Heart left ventricle (tissue), 16 donors: ENCODE measurements at regions of chr9 and their contacts with region 1.

Region 1: DNA sequence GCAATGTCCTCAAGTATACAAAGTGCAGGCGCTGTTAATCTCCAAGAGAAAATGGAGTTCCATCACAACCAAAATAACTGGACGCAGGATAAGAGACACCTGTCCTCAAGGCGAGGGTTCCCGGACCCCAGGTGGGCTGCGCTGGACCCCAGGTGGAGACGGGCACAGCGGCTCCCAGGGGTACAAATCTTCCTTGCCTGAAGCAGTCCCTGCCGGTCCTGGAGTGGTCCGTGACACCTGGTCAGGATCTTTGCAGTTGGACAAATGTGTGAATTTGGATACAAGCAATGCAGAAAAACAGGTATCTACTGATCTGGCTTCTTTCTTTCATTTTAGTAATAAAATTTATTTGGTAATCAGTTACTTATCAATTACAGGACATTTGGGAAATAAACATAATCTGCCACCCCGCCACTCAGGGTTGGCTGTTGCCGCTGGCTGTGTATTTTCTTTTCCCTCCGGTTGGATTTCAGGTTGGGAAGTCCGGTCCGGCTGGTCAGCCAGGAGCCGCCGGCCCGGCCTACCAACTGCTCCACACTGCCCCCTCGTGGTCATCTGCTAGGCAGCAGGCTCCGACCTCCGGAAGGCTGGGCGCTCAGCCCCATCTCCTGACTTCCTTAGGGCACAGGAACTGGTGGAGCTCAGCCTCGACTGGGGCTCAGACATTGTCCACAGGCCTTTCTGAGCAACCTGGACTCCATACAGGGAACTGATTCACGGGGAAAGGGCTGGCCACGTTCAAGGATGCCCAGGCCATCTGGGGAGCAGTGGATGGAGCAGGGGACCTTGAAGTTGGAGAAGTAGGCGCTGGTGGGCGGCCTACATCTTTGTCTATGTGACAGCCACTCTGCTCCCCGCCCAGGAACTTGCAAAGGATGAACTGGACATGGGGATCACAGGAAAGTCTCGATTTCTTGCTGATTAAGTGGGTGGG is 43.4 kb downstream of the NXNL2 start:
- DNase-seq: peak; percentile 70 to 92 (median 76)
- ATAC-seq: peak; percentile 84 to 93 (median 90)
- H3K4me3 ChIP-seq: peak overlapping the region in 3 of 12 donors; percentile 11 to 21 (median 18)
- H3K27ac ChIP-seq: no peak overlapping the region
- H3K4me1 ChIP-seq: peaks cover 0 to 8% (median 3%) of the 10 kb centered on the region in 12 donors
- H3K27me3 ChIP-seq: peaks cover 0 to 5% (median 0%) of the 10 kb centered on the region in 9 donors
- CTCF ChIP-seq: peak; percentile 94 to 99 (median 96)
- POLR2A ChIP-seq: no peak

Region 2: DNA sequence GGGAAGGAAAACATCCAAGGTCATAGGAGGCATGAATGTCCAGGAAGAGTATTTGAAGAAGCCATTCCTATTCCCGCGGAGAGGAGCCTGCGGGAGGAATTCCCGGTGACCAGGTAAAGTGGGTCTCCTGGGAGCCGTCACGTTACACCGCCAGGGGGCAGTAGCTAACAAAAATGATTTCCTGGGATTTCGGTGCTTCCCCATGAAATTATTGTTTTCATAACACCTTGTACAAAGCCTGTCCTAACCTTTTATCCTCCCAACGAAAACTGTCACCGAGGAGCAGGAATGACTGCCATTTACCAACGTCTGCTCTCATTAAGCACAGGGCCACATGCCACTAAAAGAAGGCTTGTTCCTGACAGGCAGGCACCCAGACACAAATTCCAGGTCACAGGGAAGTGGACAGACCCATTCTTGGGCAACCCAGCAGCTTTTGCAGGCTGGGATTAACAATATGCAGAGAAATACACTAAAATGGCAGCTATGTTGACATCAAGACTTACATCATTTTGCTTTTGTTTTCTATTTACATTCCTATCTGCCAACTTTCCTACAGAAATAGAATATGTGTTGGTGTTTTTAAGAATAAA is 893.7 kb before region 1 on chr9:
- intact Hi-C with region 1: loop called in 3 of 10 experiments (anchors 5 to 10 kb)
- DNase-seq: no peak
- ATAC-seq: peak in 1 of 4 donors; percentile 44
- H3K4me3 ChIP-seq: no peak overlapping the region
- H3K27ac ChIP-seq: peak overlapping the region in 3 of 12 donors; percentile 13 to 88 (median 13)
- H3K4me1 ChIP-seq: peaks cover 0 to 23% (median 0%) of the 10 kb centered on the region in 12 donors
- H3K27me3 ChIP-seq: no peaks in the 10 kb centered on the region
- CTCF ChIP-seq: peak; percentile 62 to 88 (median 73)
- POLR2A ChIP-seq: no peak

Region 3: DNA sequence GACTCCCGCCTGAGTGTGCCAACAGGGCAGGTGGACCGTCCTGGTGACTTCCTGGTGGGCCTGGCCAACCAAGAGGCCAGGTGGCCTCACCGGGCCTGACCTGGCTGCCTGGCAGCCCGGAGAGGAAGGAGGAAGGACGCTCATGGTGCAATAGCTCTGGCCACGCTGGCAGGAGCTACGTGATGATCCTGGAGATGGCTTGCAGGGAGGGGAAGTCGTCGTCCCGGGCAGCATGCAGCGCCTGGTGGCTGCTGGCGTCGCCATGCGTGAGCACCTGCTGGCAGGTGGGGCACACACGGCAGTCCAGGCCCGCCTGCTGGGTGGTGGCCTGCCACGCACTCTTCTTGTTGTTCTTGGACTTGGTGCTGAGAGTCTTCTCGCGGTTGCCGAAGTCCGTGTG is 634.3 kb before region 1 on chr9:
- intact Hi-C with region 1: loop called in 1 of 10 experiments (anchors 10 kb)
- DNase-seq: no peak
- ATAC-seq: no peak
- H3K4me3 ChIP-seq: no peak overlapping the region
- H3K27ac ChIP-seq: no peak overlapping the region
- H3K4me1 ChIP-seq: no peaks in the 10 kb centered on the region
- H3K27me3 ChIP-seq: peaks cover 0 to 38% (median 0%) of the 10 kb centered on the region in 9 donors
- CTCF ChIP-seq: no peak
- POLR2A ChIP-seq: no peak

Region 4: DNA sequence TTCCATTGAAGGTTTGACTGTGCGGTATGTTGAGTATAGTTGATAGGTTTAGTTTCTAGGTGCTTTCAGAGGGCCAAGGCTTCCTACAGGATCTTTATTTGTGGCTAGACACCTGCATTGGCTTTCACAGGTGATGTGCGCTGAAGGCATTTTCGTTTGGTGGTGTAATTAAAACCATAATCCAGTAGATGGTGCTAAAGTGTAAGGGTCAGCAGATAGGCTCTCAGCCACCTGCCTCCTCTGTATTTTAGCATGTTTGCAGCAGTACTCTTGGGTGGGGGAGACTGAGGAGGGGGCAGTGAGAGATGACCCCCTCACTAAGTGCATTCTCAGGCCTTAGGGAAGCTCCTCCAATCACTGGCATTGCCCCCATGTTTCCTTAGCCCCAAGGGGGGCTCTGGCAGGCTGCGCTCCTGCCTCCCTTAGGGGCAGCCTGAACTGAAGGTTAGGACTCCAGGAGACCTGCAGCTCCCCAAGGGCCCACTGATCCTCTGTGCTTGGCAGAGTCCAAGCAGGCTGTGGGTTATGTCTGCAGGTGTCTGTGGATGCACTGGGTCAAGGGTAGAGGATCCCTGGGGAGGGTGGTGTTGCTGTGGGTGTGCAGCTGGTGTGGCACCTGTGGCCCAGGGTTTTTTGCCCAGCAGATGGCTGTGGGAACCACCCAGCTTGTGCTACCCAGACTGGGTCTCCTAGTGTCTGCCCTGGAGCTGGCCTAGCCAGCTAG is 627.5 kb before region 1 on chr9:
- intact Hi-C with region 1: loop called in 6 of 10 experiments (anchors 5 to 10 kb)
- DNase-seq: no peak
- ATAC-seq: no peak
- H3K4me3 ChIP-seq: no peak overlapping the region
- H3K27ac ChIP-seq: no peak overlapping the region
- H3K4me1 ChIP-seq: no peaks in the 10 kb centered on the region
- H3K27me3 ChIP-seq: peaks cover 0 to 32% (median 0%) of the 10 kb centered on the region in 9 donors
- CTCF ChIP-seq: peak in 11 of 12 donors; percentile 15 to 53 (median 33)
- POLR2A ChIP-seq: no peak

Region 5: DNA sequence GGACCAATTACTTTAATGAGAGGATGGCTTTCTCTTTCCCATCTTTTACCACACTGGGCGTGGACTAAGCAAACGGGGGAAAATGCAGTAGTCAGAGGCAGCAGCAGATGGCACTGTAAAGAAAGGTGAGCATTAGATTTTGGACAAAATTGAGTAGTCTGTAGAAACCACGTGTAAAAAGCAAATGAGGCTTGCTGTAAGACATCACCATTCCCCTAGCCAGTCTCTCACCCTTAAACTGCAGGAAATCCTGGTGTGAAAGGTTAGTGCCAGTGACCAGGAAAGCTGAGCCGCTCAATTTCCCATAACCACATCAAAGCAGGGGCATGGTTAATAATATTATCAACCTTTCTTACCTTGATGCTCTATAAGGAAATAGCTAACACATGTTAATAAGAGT is 471.9 kb before region 1 on chr9:
- intact Hi-C with region 1: loop called in 5 of 10 experiments (anchors 5 to 10 kb)
- DNase-seq: no peak
- ATAC-seq: peak in 1 of 4 donors; percentile 55
- H3K4me3 ChIP-seq: no peak overlapping the region
- H3K27ac ChIP-seq: no peak overlapping the region
- H3K4me1 ChIP-seq: no peaks in the 10 kb centered on the region
- H3K27me3 ChIP-seq: peaks cover 0 to 19% (median 0%) of the 10 kb centered on the region in 9 donors
- CTCF ChIP-seq: peak in 11 of 12 donors; percentile 17 to 59 (median 41)
- POLR2A ChIP-seq: no peak

Region 6: GRCh38 chr9:88173378-88173999 is 404.9 kb before region 1 on chr9:
- intact Hi-C with region 1: loop called in 9 of 10 experiments (anchors 1 to 10 kb)
- DNase-seq: peak in 4 of 5 donors; percentile 25 to 56 (median 52)
- ATAC-seq: peak in 3 of 4 donors; percentile 53 to 71 (median 66)
- H3K4me3 ChIP-seq: no peak overlapping the region
- H3K27ac ChIP-seq: no peak overlapping the region
- H3K4me1 ChIP-seq: no peaks in the 10 kb centered on the region
- H3K27me3 ChIP-seq: peaks cover 0 to 2% (median 0%) of the 10 kb centered on the region in 9 donors
- CTCF ChIP-seq: peak; percentile 34 to 83 (median 70)
- POLR2A ChIP-seq: no peak

Region 7: GRCh38 chr9:88388172-88388885 is 190.1 kb before region 1 on chr9 and contains the start of gene SPIN1:
- intact Hi-C with region 1: loop called in 4 of 10 experiments (anchors 5 to 10 kb)
- DNase-seq: peak; percentile 80 to 93 (median 85)
- ATAC-seq: peak; percentile 65 to 92 (median 84)
- H3K4me3 ChIP-seq: peak within 1 kb of the TSS; percentile 70 to 99 (median 92)
- H3K27ac ChIP-seq: peak within 1 kb of the TSS; percentile 78 to 95 (median 90)
- H3K4me1 ChIP-seq: peaks cover 0 to 47% (median 23%) of the 10 kb centered on the region in 12 donors
- H3K27me3 ChIP-seq: no peaks in the 10 kb centered on the region
- CTCF ChIP-seq: peak in 10 of 12 donors; percentile 20 to 82 (median 50)
- POLR2A ChIP-seq: no peak
- total RNA-seq, gene SPIN1: 32.8 to 61.2 (median 44.5) TPM

Region 8: GRCh38 chr9:88477300-88477751 is 101.1 kb before region 1 on chr9:
- intact Hi-C with region 1: no loop called
- DNase-seq: no peak
- ATAC-seq: no peak
- H3K4me3 ChIP-seq: no peak overlapping the region
- H3K27ac ChIP-seq: no peak overlapping the region
- H3K4me1 ChIP-seq: peaks cover 0 to 20% (median 5%) of the 10 kb centered on the region in 12 donors
- H3K27me3 ChIP-seq: no peaks in the 10 kb centered on the region
- CTCF ChIP-seq: no peak
- POLR2A ChIP-seq: no peak